Head of caudate nucleus (tissue), 42 donors: ENCODE measurements at regions of chr17 and their contacts with region 1.

Region 1: GRCh38 chr17:7851438-7852256 is 3.2 kb upstream of the TMEM88 start:
- DNase-seq: peak; percentile 75 to 97 (median 94)

Region 2: DNA sequence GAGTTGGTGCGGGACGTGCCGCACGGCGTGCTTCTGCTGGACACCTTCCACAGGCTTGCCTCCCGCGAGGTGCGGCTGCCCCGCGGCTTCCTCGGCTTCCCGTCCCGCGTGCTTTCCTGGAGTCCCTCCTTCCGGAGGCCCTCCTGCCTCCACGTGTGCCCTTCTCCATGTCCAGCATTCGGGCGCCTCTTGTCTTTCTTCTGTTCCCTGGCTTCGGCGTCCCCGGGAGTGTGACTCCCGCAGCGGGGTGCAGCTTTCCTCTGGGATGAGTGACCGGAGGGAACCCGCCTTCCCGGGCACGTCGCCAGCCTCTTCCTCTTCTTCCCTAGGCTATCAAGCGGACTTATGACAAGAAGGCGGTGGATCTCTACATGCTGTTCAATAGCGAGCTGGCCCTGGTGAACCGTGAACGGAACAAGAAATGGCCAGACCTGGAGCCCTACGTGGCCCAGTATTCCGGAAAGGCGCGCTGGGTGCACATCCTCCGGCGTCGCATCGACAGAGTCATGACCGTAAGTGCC is 111.1 kb before region 1 on chr17:
- intact Hi-C with region 1: loop called (anchors 5 kb)
- DNase-seq: no peak

Region 3: DNA sequence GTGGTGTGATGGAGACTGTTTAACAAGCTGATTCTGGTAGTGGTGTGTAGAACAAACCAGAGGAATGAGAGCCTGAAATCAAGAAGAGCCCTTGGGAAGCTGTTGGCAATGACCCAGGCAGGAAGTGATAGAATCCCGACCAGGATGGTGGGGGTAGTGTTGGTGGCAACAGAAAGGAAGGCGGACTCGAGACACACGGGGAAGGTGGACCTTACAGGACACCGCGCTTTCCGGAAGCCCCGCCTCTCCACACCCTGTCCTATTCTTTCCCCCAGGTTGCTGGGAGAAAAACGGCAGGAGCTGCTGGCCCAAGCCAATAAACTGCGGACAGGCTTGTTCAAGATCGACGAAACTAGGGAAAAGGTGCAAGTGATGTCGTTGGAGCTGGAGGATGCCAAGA is 47.7 kb before region 1 on chr17:
- intact Hi-C with region 1: no loop called
- DNase-seq: no peak